Left ventricle myocardium inferior (tissue), 1 donor: ENCODE measurements at regions of chr1 and their contacts with region 1.

Region 1: GRCh38 chr1:165367375-165367993 is 11.0 kb upstream of the LMX1A start:
- DNase-seq: peak; percentile 80
- H3K4me3 ChIP-seq: no peak overlapping the region
- H3K27ac ChIP-seq: no peak overlapping the region
- H3K4me1 ChIP-seq: no peaks in the 10 kb centered on the region
- H3K27me3 ChIP-seq: peaks cover 43% of the 10 kb centered on the region
- CTCF ChIP-seq: peak; percentile 98

Region 2: DNA sequence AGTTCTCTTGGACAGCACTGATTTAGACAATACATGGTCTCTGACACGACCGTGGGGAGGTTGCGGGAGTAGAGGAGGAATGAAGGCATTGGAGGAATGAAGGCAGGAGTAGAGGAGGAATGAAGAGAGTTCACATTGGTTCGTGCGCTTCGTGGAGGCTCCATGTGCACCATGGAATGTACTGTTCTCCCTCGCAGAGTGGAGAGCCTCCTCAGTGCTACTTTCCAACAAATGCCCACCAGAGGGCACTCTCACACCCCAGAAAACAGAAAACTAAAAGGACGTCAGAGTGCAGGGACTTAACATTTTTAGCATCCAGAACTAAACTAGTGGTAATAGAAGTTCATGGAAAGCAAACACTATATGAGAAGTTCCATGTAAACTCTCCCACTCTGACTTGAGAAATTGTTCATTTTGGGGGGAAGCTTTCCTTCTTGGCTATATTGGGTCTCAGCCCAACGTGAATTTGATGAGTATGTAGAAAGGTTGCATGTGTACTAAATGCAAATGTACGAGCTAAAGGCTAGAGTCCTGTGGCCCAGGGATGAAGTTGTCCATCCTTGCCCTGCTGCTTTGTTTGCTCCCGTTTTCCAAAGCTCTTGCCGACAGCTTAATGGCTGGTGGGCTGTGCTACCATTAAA is 222.6 kb before region 1 on chr1:
- intact Hi-C with region 1: loop called (anchors 10 kb)
- DNase-seq: peak; percentile 21
- H3K4me3 ChIP-seq: no peak overlapping the region
- H3K27ac ChIP-seq: no peak overlapping the region
- H3K4me1 ChIP-seq: no peaks in the 10 kb centered on the region
- H3K27me3 ChIP-seq: peaks cover 85% of the 10 kb centered on the region
- CTCF ChIP-seq: peak; percentile 80